ENCODE measurements at regions of chr10 and their contacts with region 1.

Region 1: DNA sequence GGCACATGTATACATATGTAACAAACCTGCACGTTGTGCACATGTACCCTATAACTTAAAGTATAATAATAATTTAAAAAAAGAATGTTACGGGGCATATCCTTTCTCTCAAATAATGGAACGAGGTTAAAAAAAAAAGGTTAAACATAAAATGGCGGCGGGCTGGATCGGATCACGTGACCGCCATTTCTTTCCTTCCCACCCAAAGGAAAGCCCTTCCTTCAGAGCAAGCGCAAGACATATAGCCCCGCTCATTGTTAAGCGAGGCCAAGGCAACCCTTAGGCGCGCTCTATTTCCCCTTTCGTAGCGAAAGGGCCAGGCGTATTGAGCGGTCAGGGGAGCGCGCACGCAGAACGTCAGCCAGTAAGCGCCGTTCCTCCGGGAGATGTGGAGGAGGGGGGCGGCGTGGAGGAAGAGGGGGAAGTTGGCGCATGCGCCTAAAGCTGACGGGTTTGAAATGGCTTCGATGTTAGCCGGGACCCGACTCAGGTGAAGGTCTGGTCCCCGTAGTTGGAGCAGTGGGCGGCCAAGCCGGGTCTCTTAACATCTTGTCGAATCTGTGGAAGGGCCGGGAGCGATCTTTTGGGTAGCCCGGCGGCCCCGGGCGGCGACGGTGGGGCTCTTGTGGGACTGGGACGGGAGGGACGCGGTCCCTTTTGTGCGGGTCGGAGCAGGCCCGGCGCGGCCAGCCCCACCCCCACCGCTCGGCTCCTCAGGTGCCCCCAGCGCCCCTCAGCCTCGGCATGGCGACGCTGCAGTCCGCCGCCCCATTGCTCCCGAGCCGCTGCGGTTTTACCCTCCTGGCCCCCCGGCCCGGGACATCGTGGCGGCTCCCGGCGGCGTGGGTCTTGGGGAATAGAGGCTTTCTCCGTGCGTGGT is at the start of gene CCAR1:
- DNase-seq: peak; percentile 99
- H3K4me3 Mint-ChIP-seq: peak within 1 kb of the TSS; percentile 93
- H3K27ac Mint-ChIP-seq: peak within 1 kb of the TSS; percentile 99
- H3K4me1 Mint-ChIP-seq: peaks cover 8% of the 10 kb centered on the region
- H3K27me3 Mint-ChIP-seq: no peaks in the 10 kb centered on the region
- CTCF ChIP-seq: no peak
- total RNA-seq, gene CCAR1: 103 and 116 TPM in 2 replicates

Region 2: DNA sequence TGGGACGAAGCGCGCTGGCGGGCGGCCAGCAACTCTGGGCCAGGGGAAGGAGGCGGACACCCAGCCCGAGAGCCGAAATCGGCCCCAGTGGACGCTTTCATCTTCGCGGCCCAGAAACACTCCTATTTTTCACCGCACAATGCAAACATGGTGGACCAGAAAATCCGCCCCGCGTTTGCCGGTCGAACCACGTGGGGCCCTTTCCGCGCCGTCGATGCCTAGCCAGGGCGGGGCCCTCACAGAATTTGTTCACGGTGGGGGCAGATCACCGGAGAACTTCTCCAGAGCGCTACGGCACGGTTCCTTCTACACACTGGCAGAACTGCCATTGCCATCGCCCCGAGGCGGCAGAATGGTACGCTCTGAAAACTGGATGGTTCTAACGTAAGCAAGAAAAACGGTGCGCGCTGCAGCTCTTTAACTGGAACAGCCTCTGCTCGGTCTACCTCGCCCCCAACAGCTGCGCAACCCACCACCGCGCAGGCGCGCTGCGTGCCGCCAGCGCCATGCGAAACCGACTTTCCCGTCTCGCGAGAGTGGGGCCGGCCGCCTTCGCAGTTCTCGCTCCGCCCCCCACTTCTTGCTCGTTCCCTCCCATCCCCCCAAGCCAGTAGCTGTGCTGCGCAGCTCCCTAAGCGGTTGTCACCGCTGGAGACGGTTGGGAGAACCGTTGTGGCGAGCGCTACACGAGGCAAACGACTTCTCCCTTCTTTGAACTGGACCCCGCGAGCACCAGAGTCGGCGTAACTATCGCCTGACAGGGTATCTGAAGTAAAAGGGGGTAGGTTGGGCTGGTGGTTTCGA is 389.4 kb before region 1 on chr10 and contains the start of gene HNRNPH3:
- CTCF ChIA-PET with region 1: no interaction called
- POLR2A ChIA-PET with region 1: interaction called, 10 read pairs
- intact Hi-C with region 1: no loop called
- DNase-seq: peak; percentile 97
- H3K4me3 Mint-ChIP-seq: peak within 1 kb of the TSS; percentile 97
- H3K27ac Mint-ChIP-seq: peak within 1 kb of the TSS; percentile 99
- H3K4me1 Mint-ChIP-seq: peaks cover 29% of the 10 kb centered on the region
- H3K27me3 Mint-ChIP-seq: no peaks in the 10 kb centered on the region
- CTCF ChIP-seq: no peak
- total RNA-seq, gene HNRNPH3: 216 and 285 TPM in 2 replicates

Region 3: DNA sequence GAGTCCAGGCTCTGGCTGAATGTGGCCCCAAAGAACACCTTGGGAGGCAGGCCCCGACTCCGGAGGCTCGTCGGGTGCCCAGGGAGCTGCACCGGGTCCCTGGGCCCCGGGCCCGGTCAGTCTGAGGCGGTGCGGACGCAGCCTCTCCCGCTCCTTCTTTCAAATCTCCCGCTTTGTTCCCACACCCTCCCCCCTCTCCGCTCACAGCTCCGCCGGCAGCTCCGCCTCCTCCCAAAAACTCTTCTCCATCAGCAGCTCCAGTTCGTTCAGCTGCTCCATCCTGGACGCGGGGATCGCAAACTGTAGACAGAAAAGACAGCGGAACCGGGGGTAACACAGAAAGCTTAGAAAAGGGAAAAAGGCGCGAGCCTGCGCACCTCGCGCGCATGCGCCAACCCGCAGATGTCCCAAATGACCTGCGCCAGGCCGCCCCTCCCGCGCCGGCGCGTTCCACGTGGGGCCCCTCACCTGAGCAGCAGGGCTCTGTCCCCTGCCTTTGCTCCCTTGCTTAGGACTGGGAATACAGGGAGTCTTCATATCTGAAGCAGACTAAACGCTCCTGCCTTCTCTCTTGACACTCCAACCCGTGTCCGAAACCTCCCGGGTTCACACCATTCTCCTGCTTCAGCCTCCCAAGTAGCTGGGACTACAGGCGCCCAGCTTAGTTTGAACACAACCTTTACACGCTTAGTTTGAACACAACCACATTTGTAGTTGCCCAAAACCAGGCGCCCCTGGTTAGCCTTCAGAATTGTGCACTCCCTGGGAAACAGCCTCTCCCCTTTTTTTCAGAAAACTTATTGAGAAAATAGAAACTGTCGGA is 249.2 kb before region 1 on chr10 and contains the start of gene DNA2:
- CTCF ChIA-PET with region 1: no interaction called
- POLR2A ChIA-PET with region 1: interaction called, 4 read pairs
- intact Hi-C with region 1: loop called (anchors 2 kb)
- DNase-seq: peak; percentile 70
- H3K4me3 Mint-ChIP-seq: peak within 1 kb of the TSS; percentile 91
- H3K27ac Mint-ChIP-seq: peak within 1 kb of the TSS; percentile 67
- H3K4me1 Mint-ChIP-seq: peaks cover 9% of the 10 kb centered on the region
- H3K27me3 Mint-ChIP-seq: no peaks in the 10 kb centered on the region
- CTCF ChIP-seq: no peak
- total RNA-seq, gene DNA2: 2.6 and 6.9 TPM in 2 replicates

Region 4: DNA sequence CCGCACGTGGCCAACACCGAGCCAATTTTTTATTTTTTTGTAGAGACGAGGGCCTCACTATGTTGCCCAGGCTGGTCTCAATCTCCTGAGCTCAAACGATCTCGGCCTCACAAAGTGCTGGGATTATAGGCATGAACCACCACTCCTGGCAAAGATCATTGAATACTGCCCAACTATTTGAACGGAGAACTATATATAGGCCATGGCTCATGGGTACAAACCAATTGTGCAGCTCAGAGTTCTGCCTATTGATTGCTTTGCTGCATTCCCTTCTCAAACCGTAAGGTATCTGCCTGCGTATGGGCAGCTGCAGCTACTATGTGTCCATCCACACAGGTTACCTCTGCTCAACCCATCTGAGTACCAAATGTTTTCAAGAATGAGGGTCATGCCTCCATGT is 184.1 kb before region 1 on chr10:
- CTCF ChIA-PET with region 1: no interaction called
- POLR2A ChIA-PET with region 1: no interaction called
- intact Hi-C with region 1: no loop called
- DNase-seq: no peak
- H3K4me3 Mint-ChIP-seq: no peak overlapping the region
- H3K27ac Mint-ChIP-seq: no peak overlapping the region
- H3K4me1 Mint-ChIP-seq: no peaks in the 10 kb centered on the region
- H3K27me3 Mint-ChIP-seq: no peaks in the 10 kb centered on the region
- CTCF ChIP-seq: no peak

Region 5: GRCh38 chr10:68550747-68551411 is 170.2 kb before region 1 on chr10:
- CTCF ChIA-PET with region 1: interaction called, 4 read pairs
- POLR2A ChIA-PET with region 1: interaction called, 4 read pairs
- intact Hi-C with region 1: loop called (anchors 1 kb)
- DNase-seq: peak; percentile 82
- H3K4me3 Mint-ChIP-seq: no peak overlapping the region
- H3K27ac Mint-ChIP-seq: no peak overlapping the region
- H3K4me1 Mint-ChIP-seq: peaks cover 7% of the 10 kb centered on the region
- H3K27me3 Mint-ChIP-seq: no peaks in the 10 kb centered on the region
- CTCF ChIP-seq: peak; percentile 68

Region 6: GRCh38 chr10:68666280-68666760 is 54.7 kb before region 1 on chr10:
- CTCF ChIA-PET with region 1: no interaction called
- POLR2A ChIA-PET with region 1: no interaction called
- intact Hi-C with region 1: loop called (anchors 5 kb)
- DNase-seq: peak; percentile 50
- H3K4me3 Mint-ChIP-seq: peak overlapping the region; percentile 33
- H3K27ac Mint-ChIP-seq: peak overlapping the region; percentile 77
- H3K4me1 Mint-ChIP-seq: peaks cover 7% of the 10 kb centered on the region
- H3K27me3 Mint-ChIP-seq: no peaks in the 10 kb centered on the region
- CTCF ChIP-seq: no peak

Region 7: DNA sequence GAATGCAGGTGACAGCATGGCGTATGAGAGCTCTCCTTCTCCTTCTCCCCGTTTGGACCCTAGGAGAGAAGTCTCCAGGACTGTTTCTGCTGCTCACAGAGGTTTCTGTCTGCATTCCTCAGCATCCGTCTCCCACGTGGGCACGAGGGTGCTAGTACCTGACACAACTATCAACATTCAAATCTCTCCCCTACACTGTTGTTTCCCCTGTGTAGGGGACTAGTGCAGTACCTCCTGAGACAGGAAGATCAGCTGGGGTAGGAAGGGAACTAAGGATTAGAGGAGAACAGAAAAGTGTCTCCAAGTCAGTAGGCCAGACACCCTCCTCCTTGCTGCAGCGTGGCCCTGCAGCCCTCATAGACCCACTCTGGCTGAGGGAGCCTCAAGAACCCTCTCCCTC is 135.3 kb after region 1 on chr10:
- CTCF ChIA-PET with region 1: no interaction called
- POLR2A ChIA-PET with region 1: no interaction called
- intact Hi-C with region 1: no loop called
- DNase-seq: no peak
- H3K4me3 Mint-ChIP-seq: no peak overlapping the region
- H3K27ac Mint-ChIP-seq: no peak overlapping the region
- H3K4me1 Mint-ChIP-seq: no peaks in the 10 kb centered on the region
- H3K27me3 Mint-ChIP-seq: no peaks in the 10 kb centered on the region
- CTCF ChIP-seq: no peak

Measured in MCF 10A (cell line).